Activated naive CD8-positive, alpha-beta T cell treated with anti-CD3 and anti-CD28 coated beads, Interleukin-2, amount 10 ng/mL, durations not matched to agents 7 days and 5 days (primary cell): ENCODE measurements at regions of chr19 and their contacts with region 1.

Region 1: DNA sequence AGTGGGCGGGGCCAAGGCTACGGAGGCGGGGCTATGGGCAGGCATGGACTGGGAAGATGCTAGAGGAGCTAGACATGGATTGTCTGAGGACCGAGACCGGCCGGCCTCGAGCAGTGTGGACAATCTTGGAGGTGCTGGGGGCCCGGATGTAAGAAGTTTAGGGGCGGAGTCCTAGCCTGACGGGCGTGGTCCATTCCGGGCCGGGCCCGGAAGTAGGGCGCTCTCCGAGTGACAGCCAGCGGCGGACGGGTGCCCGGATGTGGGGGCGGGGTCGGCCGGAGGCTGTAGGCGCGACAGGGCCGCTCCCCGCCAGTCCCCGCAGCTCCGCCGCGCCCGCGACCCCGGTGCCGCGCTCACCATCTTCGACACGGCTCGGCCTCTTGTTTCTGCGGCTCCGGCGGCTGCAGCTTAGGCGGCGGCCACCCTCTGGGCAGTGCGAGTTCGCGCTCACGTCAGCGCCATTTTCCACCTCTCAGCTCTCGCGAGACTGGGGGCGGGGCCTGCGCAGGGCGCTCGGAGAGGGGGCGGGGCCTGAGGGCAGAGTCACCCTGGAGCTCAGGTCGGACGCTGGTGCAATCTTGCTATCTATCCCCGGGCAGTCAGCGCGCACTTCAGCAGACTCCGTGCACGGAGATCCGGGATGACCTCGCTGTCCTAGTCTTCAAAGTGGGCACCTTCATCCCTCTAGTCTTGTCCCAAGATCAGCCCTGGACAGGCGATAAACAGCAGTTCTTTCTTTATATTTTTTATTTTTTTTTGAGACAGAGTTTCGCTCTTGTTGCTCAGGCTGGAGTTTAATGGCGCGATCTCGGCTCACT is at the start of gene ZNF414:
- DNase-seq: peak; percentile 100
- ATAC-seq: peak; percentile 80
- H3K4me3 Mint-ChIP-seq: peak within 1 kb of the TSS; percentile 96
- H3K27ac Mint-ChIP-seq: peak within 1 kb of the TSS; percentile 96
- H3K4me1 Mint-ChIP-seq: peaks cover 41% of the 10 kb centered on the region
- H3K27me3 Mint-ChIP-seq: no peaks in the 10 kb centered on the region
- total RNA-seq, gene ZNF414: 38.2 to 40.5 TPM

Region 2: GRCh38 chr19:8321060-8321985 is 192.6 kb before region 1 on chr19 and contains the starts of genes NDUFA7 and RPS28:
- POLR2A ChIA-PET with region 1: interaction called, 13 read pairs
- DNase-seq: peak; percentile 98
- ATAC-seq: peak; percentile 89
- H3K4me3 Mint-ChIP-seq: peak within 1 kb of the TSS; percentile 99
- H3K27ac Mint-ChIP-seq: peak within 1 kb of the TSS; percentile 100
- H3K4me1 Mint-ChIP-seq: peaks cover 30% of the 10 kb centered on the region
- H3K27me3 Mint-ChIP-seq: no peaks in the 10 kb centered on the region
- total RNA-seq, gene NDUFA7: 53.8 to 59.0 TPM
- total RNA-seq, gene RPS28: 1,838 to 1,917 TPM

Region 3: DNA sequence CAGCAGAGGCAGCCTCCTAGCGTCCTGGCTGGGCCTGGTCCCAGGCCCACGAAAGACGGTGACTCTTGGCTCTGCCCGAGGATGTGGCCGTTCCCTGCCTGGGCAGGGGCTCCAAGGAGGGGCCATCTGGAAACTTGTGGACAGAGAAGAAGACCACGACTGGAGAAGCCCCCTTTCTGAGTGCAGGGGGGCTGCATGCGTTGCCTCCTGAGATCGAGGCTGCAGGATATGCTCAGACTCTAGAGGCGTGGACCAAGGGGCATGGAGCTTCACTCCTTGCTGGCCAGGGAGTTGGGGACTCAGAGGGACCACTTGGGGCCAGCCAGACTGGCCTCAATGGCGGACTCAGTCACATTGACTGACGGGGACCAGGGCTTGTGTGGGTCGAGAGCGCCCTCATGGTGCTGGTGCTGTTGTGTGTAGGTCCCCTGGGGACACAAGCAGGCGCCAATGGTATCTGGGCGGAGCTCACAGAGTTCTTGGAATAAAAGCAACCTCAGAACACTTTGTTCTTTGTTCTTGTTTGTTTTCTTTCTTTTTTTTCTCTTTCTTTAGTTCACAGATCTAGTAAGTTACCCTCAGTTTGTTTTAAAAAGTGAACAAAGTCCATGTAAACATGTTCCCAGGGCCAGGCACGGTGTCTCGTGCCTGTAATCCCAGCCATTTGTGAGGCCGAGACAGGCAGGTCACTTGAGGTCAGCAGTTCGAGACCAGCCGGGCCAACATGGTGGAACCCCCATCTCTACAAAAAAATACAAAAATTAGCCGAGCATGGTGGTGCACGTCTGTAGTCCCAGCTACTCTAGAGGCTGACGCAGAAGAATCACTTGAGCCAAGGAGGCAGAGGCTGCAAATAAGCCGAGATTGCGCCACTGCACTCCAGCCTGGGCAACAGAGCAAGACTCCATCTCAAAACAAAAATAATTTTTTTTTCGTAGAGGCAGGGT is 139.8 kb before region 1 on chr19:
- POLR2A ChIA-PET with region 1: no interaction called
- DNase-seq: no peak
- ATAC-seq: no peak
- H3K4me3 Mint-ChIP-seq: no peak overlapping the region
- H3K27ac Mint-ChIP-seq: no peak overlapping the region
- H3K4me1 Mint-ChIP-seq: peaks cover 12% of the 10 kb centered on the region
- H3K27me3 Mint-ChIP-seq: peaks cover 2% of the 10 kb centered on the region

Region 4: GRCh38 chr19:8444645-8445487 is 69.0 kb before region 1 on chr19 and contains the start of gene HNRNPM:
- POLR2A ChIA-PET with region 1: interaction called, 32 read pairs
- DNase-seq: peak; percentile 100
- ATAC-seq: peak; percentile 96
- H3K4me3 Mint-ChIP-seq: peak within 1 kb of the TSS; percentile 100
- H3K27ac Mint-ChIP-seq: peak within 1 kb of the TSS; percentile 99
- H3K4me1 Mint-ChIP-seq: peaks cover 33% of the 10 kb centered on the region
- H3K27me3 Mint-ChIP-seq: peaks cover 4% of the 10 kb centered on the region
- total RNA-seq, gene HNRNPM: 188 to 198 TPM

Region 5: GRCh38 chr19:8494158-8494557 is 19.7 kb before region 1 on chr19:
- POLR2A ChIA-PET with region 1: interaction called, 26 read pairs
- DNase-seq: peak; percentile 58
- ATAC-seq: peak; percentile 79
- H3K4me3 Mint-ChIP-seq: peak overlapping the region; percentile 40
- H3K27ac Mint-ChIP-seq: peak overlapping the region; percentile 83
- H3K4me1 Mint-ChIP-seq: peaks cover 18% of the 10 kb centered on the region
- H3K27me3 Mint-ChIP-seq: no peaks in the 10 kb centered on the region

Region 6: DNA sequence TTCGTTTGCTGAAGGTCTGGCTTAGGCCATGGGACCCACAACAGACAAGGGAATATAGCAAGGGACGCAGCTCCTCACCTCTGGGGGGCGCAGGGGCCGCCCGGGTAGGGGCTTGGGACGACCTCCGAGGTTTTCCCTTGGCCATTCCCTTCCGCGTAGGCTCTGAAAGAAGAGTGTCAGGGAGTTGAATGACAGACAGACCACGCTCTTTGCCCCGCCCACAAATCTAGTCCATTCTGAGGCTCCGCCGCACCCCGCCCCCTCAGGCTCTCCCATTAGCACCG is 11.4 kb after region 1 on chr19:
- POLR2A ChIA-PET with region 1: interaction called, 14 read pairs
- DNase-seq: no peak
- ATAC-seq: no peak
- H3K4me3 Mint-ChIP-seq: no peak overlapping the region
- H3K27ac Mint-ChIP-seq: no peak overlapping the region
- H3K4me1 Mint-ChIP-seq: no peaks in the 10 kb centered on the region
- H3K27me3 Mint-ChIP-seq: no peaks in the 10 kb centered on the region

Region 7: GRCh38 chr19:8561075-8561764 is 47.3 kb after region 1 on chr19:
- POLR2A ChIA-PET with region 1: no interaction called
- DNase-seq: no peak
- ATAC-seq: no peak
- H3K4me3 Mint-ChIP-seq: no peak overlapping the region
- H3K27ac Mint-ChIP-seq: peak overlapping the region; percentile 68
- H3K4me1 Mint-ChIP-seq: peaks cover 23% of the 10 kb centered on the region
- H3K27me3 Mint-ChIP-seq: no peaks in the 10 kb centered on the region

Region 8: GRCh38 chr19:8580710-8581281 is 66.9 kb after region 1 on chr19:
- POLR2A ChIA-PET with region 1: interaction called, 107 read pairs
- DNase-seq: peak; percentile 92
- ATAC-seq: peak; percentile 48
- H3K4me3 Mint-ChIP-seq: no peak overlapping the region
- H3K27ac Mint-ChIP-seq: no peak overlapping the region
- H3K4me1 Mint-ChIP-seq: peaks cover 13% of the 10 kb centered on the region
- H3K27me3 Mint-ChIP-seq: peaks cover 2% of the 10 kb centered on the region